Posterior vena cava (tissue), 2 donors: ENCODE measurements at regions of chr10 and their contacts with region 1.

Region 1: GRCh38 chr10:61882621-61883373 is 18.7 kb upstream of the ARID5B start:
- DNase-seq: no peak

Region 2: DNA sequence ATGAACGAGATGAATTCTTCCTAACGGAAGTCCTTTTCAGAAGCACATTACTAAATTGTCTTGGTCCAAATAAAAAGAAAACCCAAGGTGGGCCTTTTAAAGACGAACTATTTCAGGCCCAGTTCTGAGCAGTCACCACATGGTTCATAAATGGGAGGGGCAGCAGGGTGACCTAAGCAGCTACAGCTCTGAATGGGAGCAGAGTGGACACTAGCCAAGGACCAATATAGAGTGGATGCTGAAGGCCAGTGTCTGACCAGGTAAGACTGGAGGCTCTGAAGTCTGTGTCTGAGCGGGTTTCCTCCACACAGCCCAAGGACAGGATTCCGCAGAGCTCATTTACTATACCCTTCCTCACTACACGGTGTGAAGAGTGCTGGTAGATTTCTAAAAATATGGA is 588.7 kb before region 1 on chr10:
- intact Hi-C with region 1: loop called in 1 of 2 experiments (anchors 5 kb)
- DNase-seq: no peak

Region 3: GRCh38 chr10:62250594-62251198 is 367.9 kb after region 1 on chr10:
- intact Hi-C with region 1: loop called in 1 of 2 experiments (anchors 10 kb)
- DNase-seq: no peak